Prostate gland (tissue), 2 donors: ENCODE measurements at regions of chr17 and their contacts with region 1.

Region 1: GRCh38 chr17:45108595-45109521 is 23.5 kb downstream of the PLCD3 start:
- DNase-seq: no peak
- H3K4me3 ChIP-seq: no peak overlapping the region
- H3K27ac ChIP-seq: no peak overlapping the region
- H3K4me1 ChIP-seq: no peaks in the 10 kb centered on the region
- H3K27me3 ChIP-seq: no peaks in the 10 kb centered on the region
- CTCF ChIP-seq: no peak
- POLR2A ChIP-seq: no peak

Region 2: DNA sequence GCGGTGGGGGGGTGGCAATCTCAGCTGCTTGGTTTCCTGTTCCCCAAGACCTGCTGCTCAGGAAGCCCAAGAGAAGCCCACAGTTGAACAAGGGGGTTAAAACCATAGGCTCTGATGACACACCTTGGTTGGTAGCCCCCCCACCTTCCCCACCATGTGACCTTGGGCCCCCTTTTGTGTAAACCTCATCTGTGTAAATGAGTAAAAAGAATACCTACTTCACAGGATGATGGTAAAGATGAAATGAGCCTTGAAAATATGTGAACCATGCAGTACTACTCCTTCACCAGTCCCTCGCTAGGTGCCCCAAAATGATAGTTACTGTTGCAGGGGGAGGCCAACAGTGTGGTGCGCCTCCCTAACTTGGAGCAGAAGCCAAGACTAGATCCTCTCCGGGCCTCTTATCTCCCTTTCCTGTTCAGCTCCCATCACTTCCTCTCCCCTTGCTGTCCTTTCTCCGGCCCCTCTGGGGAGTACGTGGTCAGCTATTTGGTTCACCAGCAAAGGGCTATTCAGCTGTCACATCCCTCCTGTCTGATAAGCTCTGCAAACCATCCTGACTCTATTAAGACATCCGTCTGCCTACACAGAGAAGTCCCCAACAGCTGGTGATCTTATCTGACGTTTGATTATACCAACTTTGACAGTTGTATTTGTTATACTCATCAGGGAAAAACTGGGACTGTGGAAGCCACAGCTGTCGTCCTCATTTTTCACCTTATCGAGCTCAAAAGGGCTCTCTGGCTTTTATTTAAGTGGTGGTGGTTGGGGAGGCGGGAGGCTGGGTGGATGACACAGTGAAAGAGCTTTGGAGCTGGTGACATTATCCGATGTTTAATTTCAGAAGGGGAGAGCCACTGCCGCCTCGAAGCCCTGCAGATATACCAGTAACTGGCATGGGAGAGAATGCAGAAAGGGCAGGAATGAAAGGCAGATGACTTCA is 77.4 kb before region 1 on chr17:
- intact Hi-C with region 1: no loop called
- DNase-seq: no peak
- H3K4me3 ChIP-seq: no peak overlapping the region
- H3K27ac ChIP-seq: no peak overlapping the region
- H3K4me1 ChIP-seq: no peaks in the 10 kb centered on the region
- H3K27me3 ChIP-seq: no peaks in the 10 kb centered on the region
- CTCF ChIP-seq: no peak
- POLR2A ChIP-seq: no peak

Region 3: DNA sequence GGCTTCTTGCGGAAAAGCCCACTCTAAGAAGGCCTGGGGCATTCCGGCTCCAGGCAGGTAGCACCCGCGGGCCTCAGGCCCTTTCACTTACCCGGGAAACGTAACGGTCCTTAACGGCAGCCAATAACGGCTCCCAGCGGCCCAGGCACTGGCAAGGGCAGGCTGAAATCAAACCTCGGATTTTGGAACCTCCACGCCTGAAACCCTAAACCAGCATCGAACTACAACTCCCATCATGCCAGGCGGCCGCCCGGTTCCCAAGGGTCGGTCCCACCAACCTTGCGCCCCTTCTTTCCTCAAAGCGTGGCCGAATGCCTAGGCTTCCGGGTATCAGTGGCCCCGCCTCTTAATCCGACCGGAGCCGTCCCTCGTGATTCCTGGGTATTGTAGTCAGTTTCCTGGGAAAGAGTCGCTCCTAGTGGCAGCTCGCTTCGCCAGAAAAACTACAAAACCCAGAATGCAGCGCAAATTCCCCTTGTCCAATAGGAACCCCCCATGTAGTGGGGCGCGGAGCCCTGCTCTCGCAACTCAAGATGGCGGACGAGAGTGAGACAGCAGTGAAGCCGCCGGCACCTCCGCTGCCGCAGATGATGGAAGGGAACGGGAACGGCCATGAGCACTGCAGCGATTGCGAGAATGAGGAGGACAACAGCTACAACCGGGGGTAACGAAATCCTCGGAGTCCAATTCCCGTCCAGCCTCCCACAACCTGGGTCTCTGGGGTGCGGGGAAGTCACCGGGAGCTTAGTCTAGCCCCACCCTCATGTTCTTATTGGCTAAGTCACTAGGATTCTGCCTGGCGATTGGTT is 47.9 kb before region 1 on chr17 and contains the start of gene NMT1:
- intact Hi-C with region 1: loop called (anchors 5 kb)
- DNase-seq: peak; percentile 98
- H3K4me3 ChIP-seq: peak within 1 kb of the TSS; percentile 65 to 74
- H3K27ac ChIP-seq: peak within 1 kb of the TSS; percentile 85 to 87
- H3K4me1 ChIP-seq: peaks cover 4% of the 10 kb centered on the region
- H3K27me3 ChIP-seq: no peaks in the 10 kb centered on the region
- CTCF ChIP-seq: peak in 3 of 4 experiments; percentile 25 to 63 (median 35)
- POLR2A ChIP-seq: peak; percentile 77
- total RNA-seq, gene NMT1: 39.4 to 68.5 TPM